GM13976 (cell line): ENCODE measurements at regions of chrX and their contacts with region 1.

Region 1: GRCh38 chrX:100649550-100650356 is 5.8 kb downstream of the SRPX2 start:
- DNase-seq: no peak
- CTCF ChIP-seq: no peak

Region 2: GRCh38 chrX:100512471-100512870 is 137.3 kb before region 1 on chrX:
- in situ Hi-C with region 1: loop called (anchors 25 kb)
- DNase-seq: peak; percentile 34
- CTCF ChIP-seq: peak; percentile 37